ENCODE measurements at regions of chr9 and their contacts with region 1.

Region 1: GRCh38 chr9:27276193-27277030 is 20.5 kb downstream of the EQTN start:
- DNase-seq: no peak
- H3K4me3 ChIP-seq: no peak overlapping the region
- CTCF ChIP-seq: peak; percentile 50

Region 2: DNA sequence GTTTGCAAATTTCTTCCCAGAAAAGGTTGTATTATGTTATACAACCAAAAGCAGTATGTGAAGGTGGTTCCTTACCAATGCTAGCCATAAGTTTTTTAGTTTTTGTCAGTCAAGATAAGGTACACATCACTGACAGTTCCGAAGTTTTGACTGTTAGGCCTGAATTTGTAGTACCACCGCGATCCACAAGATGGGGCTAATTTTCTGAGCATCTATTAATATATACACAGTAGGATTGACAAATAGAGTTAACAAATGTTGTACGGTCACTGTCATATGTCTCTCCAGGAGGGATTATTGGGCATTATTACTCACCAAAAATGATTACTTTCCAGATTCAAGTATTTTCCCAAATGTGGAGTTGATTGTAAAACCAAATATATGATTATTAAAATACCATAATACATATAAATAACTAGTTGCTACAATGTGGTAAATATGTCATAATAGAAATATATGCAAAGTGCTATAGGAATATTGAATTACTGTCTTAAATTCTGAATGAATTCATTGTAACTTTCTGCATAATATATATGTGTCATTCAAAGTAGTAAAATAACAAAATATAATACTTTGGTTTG is 242.5 kb before region 1 on chr9:
- CTCF ChIA-PET with region 1: interaction called, 101 read pairs
- POLR2A ChIA-PET with region 1: no interaction called
- DNase-seq: no peak
- H3K4me3 ChIP-seq: no peak overlapping the region
- CTCF ChIP-seq: peak; percentile 55

Region 3: DNA sequence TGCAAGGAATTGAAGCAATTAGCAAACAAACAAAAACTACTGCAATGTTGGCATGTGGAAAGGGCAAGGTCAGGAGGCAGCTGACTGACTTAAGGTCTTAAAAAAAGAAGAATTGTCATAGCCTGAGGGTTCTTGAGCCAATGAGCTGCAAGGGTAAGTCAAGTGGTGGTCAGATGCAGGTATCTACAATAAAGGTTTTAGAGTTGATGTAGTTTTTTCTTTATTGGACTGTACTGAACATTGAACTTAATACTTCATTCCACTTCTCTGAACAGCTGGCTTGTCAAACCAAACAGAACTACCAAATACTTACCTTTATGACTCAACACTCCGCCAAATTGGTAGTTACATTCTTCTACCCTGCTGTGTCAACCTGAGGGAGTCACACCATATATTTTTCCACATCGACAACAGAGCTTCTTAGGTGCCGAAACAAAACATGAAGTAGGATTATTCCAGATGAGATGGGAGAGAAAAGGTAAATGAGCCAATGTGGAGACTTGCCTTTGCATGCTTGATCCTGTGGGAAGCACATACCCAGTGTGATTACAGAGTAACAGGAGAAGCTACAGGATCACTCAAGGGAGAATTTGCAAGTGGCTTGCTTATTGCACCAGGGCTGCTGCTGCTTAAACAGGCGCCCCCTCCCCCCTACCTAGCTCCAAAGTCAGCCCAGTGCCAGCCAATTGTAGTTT is 14.7 kb before region 1 on chr9:
- CTCF ChIA-PET with region 1: interaction called, 22 read pairs
- POLR2A ChIA-PET with region 1: no interaction called
- DNase-seq: no peak
- H3K4me3 ChIP-seq: no peak overlapping the region
- CTCF ChIP-seq: no peak

Region 4: GRCh38 chr9:27377147-27377807 is 100.9 kb after region 1 on chr9:
- CTCF ChIA-PET with region 1: no interaction called
- POLR2A ChIA-PET with region 1: no interaction called
- DNase-seq: no peak
- H3K4me3 ChIP-seq: no peak overlapping the region
- CTCF ChIP-seq: no peak

Region 5: GRCh38 chr9:27460226-27461023 is 184.0 kb after region 1 on chr9:
- CTCF ChIA-PET with region 1: no interaction called
- POLR2A ChIA-PET with region 1: no interaction called
- DNase-seq: no peak
- H3K4me3 ChIP-seq: no peak overlapping the region
- CTCF ChIP-seq: no peak

Region 6: GRCh38 chr9:27505744-27506161 is 229.3 kb after region 1 on chr9:
- CTCF ChIA-PET with region 1: no interaction called
- POLR2A ChIA-PET with region 1: no interaction called
- DNase-seq: no peak
- H3K4me3 ChIP-seq: no peak overlapping the region
- CTCF ChIP-seq: no peak

Measured in AG04449 (cell line).